Activated T-helper 1 cell treated with anti-CD3 and anti-CD28 coated beads, Interleukin-12 subunit alpha, Interleukin-12 subunit beta, Interleukin-2, Interleukin-4 antibody, amounts not matched to agents 30 ng/mL and 10 ng/mL and 1 ng/mL, durations not matched to agents 14 hours and 24 hours and 36 hours (primary cell): ENCODE measurements at regions of chr18 and their contacts with region 1.

Region 1: DNA sequence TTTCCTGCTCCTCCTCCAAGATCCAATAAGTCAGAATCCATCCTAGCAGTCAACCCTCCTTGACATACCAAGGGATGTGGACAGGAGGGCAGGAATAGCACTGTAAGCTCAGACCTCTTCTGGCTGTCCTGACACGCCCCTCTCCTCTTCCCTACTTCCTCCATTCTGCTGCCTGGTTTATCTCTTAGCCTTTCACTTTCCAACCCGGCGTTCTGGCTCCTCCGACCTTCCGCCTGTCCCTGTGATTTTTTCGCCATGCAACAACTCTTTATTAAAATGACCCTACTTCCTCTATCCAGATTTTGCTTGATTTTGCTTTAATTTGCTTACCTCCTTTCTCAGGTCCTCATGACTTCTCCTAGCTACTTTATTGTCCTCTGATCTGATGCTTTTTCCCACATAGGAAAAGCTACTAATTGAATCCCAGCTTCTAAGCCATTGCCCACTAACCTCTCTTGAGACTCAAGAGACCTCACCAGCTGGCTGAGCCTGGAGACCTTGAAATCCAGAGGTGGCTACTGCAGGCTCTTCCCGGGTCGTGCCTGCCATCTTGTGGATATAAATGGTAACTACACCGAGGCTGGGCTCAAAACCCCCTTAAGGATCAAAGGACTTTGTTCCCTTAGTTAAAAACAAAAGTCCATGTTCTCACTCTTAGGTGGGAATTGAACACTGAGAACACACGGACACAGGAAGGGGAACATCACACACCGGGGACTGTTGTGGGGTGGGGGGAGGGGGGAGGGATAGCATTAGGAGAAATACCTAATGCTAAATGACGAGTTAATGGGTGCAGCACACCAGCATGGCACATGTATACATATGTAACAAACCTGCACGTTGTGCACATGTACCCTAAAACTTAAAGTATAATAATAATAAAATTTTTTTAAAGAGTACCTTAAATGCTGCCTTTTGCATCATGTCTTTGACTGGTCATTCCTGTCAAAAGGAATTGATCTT is 139.4 kb downstream of the AKAIN1 start:
- DNase-seq: peak; percentile 30
- H3K4me3 Mint-ChIP-seq: no peak overlapping the region
- H3K27ac Mint-ChIP-seq: no peak overlapping the region
- H3K4me1 Mint-ChIP-seq: peaks cover 15% of the 10 kb centered on the region
- H3K27me3 Mint-ChIP-seq: no peaks in the 10 kb centered on the region

Region 2: DNA sequence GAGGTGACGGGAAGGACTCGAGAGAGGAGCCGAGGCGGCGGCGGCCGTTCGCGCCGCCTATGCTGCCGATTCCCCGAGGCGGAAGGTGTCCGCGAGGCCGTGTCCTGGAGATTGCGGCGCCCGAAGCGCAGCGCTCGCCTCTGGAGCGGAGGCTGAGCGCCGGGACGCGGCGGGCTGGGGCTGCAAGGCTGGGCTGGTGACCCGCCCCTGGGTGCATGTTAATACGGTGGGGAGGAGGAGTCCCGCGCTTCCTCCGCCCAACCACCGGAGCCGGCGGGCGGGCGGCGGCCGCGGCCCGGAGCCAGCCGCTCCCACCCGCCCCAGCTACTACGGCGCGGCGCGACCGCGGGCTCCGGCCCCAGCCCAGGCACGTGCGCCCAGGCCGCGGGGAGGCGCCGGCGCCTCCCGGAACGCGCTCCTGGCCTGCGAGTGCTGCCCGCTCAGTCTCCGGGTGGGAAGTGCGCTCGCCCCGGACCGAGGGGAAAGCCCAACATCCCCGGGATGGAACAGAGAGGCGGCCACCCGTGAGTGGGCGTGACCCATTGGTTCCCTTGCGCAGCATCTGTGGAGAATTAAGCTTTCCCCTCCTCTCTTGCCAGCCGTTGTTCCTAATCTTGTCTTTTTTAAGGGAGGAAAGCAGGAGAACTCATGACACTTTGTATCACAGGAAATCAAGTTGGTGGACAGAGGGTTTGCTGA is 602.4 kb before region 1 on chr18 and contains the start of gene DLGAP1:
- intact Hi-C with region 1: loop called (anchors 10 kb)
- DNase-seq: no peak
- H3K4me3 Mint-ChIP-seq: no peak within 1 kb of the TSS
- H3K27ac Mint-ChIP-seq: no peak within 1 kb of the TSS
- H3K4me1 Mint-ChIP-seq: no peaks in the 10 kb centered on the region
- H3K27me3 Mint-ChIP-seq: peaks cover 30% of the 10 kb centered on the region
- total RNA-seq, gene DLGAP1: 0.17 and 0.36 TPM in 2 replicates